Breast epithelium (tissue), 4 donors: ENCODE measurements at regions of chrX and their contacts with region 1.

Region 1: DNA sequence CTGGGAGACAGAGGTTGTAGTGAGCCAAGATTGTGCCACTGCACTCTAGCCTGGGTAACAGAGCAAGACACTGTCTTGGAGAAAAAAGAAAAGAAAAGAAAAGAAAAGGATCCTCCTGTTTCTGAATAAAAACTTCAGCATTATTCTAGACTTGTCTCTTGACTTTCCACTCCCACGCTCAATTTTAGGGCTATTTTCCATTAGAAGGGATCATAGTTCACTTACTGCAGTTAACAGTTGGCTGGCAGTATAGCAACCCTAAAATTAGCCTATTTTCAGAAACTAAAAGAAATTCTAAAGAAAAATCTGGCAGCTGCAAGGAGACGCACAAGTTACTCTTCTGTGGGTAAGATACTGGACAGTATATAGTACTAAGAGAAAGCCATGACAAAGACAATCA is 28.1 kb downstream of the THOC2 start:
- DNase-seq: no peak
- H3K4me3 ChIP-seq: no peak overlapping the region
- H3K27ac ChIP-seq: no peak overlapping the region
- H3K4me1 ChIP-seq: no peaks in the 10 kb centered on the region
- H3K27me3 ChIP-seq: no peaks in the 10 kb centered on the region
- CTCF ChIP-seq: no peak
- POLR2A ChIP-seq: no peak

Region 2: DNA sequence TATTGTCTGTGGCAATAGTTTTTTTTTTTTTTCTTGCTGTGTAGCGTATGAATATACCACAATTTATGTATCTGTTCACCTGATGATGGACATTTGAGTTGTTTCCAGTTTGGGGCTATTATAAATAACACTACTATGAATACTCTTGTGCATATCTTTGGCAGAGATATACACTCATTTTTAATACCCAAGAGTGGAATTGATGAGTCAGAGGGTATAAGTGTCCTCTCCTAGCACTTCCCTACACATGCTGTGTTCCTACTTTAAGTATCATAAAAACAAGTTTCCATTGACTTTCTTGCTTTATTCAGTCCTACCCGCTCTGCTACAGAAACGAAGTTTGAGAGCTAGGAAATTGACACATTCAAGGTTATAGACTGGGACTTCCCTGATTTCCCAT is 194.9 kb after region 1 on chrX:
- intact Hi-C with region 1: loop called (anchors 10 kb)
- DNase-seq: no peak
- H3K4me3 ChIP-seq: no peak overlapping the region
- H3K27ac ChIP-seq: no peak overlapping the region
- H3K4me1 ChIP-seq: no peaks in the 10 kb centered on the region
- H3K27me3 ChIP-seq: no peaks in the 10 kb centered on the region
- CTCF ChIP-seq: no peak
- POLR2A ChIP-seq: no peak